ENCODE measurements at regions of chr17 and their contacts with region 1.

Region 1: DNA sequence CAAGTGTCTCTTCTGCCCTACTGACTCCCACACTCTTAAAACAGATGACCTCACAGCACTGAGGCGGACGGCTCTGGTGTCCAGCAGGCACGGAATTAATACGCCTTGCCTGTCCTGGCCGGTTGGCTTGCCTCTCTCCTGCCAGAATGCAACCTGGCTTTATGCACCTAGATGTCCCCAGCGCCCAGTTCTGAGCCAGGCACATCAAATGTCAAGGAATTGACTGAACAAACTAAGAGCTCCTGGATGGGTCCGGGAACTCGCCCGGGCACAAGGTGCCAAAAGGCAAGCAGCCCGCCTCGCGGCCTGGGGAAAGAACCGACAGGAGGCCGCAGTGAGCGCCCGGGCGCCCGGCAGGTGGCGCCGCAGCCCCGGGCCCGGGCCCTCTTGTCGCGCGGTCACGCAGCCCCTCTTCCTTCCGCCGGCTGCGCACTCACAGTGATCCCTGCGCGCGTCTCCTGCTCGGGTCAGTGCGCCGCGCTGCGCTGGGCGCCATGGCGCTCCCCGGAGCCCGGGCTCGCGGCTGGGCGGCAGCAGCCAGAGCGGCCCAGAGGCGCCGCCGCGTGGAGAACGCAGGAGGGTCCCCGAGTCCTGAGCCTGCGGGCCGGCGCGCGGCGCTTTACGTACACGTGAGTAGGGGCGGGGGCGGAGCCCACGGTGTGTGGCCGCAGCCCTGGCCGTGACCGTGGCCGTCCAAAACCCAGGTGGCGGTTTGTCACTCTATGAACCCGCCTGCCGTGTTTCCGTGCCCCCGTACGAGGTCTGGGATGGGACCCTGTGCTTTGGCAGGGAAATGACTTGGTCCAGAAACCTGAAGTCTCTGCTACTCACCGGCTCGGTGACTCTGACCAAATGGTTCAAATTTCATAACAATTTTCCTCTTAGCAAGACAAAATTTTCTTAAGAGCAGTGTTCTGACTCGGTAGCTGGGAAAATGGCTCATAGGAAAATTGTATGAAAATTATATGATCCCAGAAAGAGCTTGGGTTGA is at the start of gene RSAD1:
- DNase-seq: peak; percentile 26
- H3K4me3 ChIP-seq: peak within 1 kb of the TSS; percentile 81
- CTCF ChIP-seq: peak; percentile 64

Region 2: DNA sequence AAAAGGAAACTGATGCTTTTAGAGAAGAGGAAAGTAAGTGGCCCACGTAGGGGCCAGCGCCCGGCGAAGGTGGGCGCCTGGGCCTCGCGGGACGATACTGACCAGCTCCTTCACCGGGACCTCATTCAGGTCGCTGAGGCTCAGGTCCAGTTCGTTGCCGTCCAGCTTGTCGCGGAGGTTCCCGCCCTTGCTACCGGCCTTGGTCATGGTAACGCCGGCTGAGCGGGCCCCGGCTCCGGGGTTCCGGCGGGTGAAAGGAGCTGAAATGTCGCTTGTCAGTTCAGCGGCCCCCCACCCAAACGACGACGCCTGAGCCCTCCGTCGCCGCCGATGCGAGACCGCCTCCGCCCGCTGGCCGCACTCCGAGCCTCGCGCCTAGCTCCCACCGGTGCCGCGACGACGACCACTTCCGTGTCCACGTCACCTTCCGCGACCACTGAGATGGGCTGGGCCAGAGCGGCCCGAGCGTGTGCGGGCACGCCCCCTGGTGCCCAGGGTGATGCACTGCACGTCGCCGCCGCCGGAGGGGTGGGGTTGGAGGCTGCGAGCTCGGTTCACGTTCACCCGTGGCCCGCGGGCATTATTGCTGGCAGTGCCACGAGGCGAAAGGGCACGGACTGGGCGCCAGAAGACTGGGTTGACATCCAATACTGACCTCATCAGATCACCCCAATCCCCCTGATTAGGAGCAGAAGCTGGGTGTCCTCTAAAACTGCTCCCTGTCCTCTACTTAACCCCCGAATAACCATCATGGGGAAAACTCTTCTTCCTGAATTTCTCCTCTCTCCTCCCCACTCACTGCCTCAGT is 81.4 kb before region 1 on chr17 and contains the start of gene LRRC59:
- CTCF ChIA-PET with region 1: interaction called, 38 read pairs
- POLR2A ChIA-PET with region 1: no interaction called
- DNase-seq: no peak
- H3K4me3 ChIP-seq: peak within 1 kb of the TSS; percentile 94
- CTCF ChIP-seq: peak; percentile 100

Region 3: GRCh38 chr17:50468409-50469207 is 10.1 kb before region 1 on chr17 and contains the start of gene CHAD:
- CTCF ChIA-PET with region 1: interaction called, 12 read pairs
- POLR2A ChIA-PET with region 1: no interaction called
- DNase-seq: no peak
- H3K4me3 ChIP-seq: peak within 1 kb of the TSS; percentile 34
- CTCF ChIP-seq: no peak

Region 4: GRCh38 chr17:50501054-50501453 is 22.4 kb after region 1 on chr17:
- CTCF ChIA-PET with region 1: interaction called, 78 read pairs
- POLR2A ChIA-PET with region 1: no interaction called
- DNase-seq: no peak
- H3K4me3 ChIP-seq: no peak overlapping the region
- CTCF ChIP-seq: peak; percentile 10

Region 5: DNA sequence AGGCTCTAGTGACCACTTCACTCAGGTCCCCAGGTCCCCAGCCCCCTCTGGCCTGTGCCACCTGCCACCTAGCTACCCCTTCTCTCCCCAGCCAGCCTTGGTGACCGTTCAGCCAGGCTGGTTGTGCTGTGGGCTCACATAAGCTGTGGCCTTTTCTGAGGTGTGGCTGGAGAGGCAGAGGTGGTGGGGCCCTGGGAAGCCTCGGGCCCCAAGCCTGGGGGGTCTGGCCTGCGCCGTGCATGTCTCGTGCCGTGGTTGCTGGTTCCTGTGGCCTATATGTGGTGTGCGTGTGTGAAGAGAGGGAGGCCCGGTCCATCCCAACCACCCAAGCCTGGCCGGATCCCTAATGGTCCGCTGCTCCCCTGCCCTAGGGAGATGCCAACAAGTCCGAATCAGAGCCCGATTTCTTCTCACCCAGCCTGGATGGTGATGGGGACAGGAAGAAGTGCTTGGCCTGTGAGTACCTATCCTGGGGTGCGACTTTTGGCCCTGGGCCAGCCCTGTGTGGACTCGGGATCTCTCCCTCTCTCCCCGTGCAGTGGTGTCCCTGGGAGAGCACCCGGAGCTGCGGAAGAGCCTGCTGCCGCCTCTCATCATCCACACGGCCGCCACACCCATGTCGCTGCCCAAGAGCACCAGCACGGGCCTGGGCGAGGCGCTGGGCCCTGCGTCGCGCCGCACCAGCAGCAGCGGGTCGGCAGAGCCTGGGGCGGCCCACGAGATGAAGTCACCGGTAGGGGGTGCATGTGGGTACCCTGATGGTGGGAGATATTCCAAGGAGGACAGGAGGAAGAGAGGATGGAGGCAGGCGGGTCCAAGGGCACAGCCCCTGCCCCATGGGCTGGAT is 117.7 kb after region 1 on chr17:
- CTCF ChIA-PET with region 1: no interaction called
- POLR2A ChIA-PET with region 1: no interaction called
- DNase-seq: no peak
- H3K4me3 ChIP-seq: no peak overlapping the region
- CTCF ChIP-seq: peak; percentile 27

Region 6: DNA sequence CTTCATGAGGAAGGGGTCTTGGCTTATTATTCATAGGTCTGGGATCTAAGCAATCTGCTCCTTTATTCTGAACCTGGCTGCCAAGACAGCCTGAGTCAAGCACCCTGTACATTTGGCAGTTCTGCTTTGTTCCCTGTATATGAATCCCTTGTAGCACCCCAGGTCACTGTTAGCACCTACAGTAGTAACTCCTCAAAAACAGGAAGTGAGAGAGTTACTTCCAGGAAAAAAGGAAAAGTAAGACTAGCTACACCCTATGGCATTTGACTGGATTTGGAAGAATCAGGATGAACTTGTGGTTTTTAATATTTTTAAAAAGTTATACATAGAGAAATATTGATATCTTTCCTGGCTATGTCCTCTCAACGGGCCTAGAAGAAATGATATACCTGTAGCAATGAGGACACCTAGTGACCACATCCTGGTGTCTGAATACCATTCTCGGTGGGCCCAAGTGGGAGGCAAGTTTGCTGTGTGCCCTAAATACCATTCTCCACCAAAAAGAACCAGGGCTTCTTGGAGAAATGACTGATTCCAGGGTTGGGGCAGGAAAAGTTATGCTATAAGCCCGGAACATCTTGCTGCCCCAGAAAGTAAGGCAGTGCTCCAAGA is 219.1 kb after region 1 on chr17:
- CTCF ChIA-PET with region 1: interaction called, 20 read pairs
- POLR2A ChIA-PET with region 1: no interaction called
- DNase-seq: no peak
- H3K4me3 ChIP-seq: no peak overlapping the region
- CTCF ChIP-seq: no peak